IMR-90 (cell line): ENCODE measurements at regions of chr17 and their contacts with region 1.

Region 1: GRCh38 chr17:59619293-59620063 is at the start of gene CLTC:
- DNase-seq: peak; percentile 98
- ATAC-seq: peak; percentile 83
- H3K4me3 ChIP-seq: peak within 1 kb of the TSS; percentile 61
- H3K27ac ChIP-seq: peak within 1 kb of the TSS; percentile 93
- H3K4me1 ChIP-seq: peaks cover 1% of the 10 kb centered on the region; the same call in 1 of the 2 replicates
- H3K27me3 ChIP-seq: no peaks in the 10 kb centered on the region
- CTCF ChIP-seq: no peak
- POLR2A ChIP-seq: peak; percentile 95
- RAD21 ChIP-seq: 0 out of 2 replicates have a peak, but pooled peaks have one; percentile 7
- total RNA-seq, gene CLTC: 576 and 641 TPM in 2 replicates

Region 2: GRCh38 chr17:59565171-59565969 is 54.1 kb before region 1 on chr17 and contains the start of gene DHX40:
- CTCF ChIA-PET with region 1: no interaction called
- POLR2A ChIA-PET with region 1: no interaction called
- dilution Hi-C with region 1: no loop called
- in situ Hi-C with region 1: no loop called
- intact Hi-C with region 1: no loop called
- DNase-seq: peak; percentile 96
- ATAC-seq: peak; percentile 97
- H3K4me3 ChIP-seq: peak within 1 kb of the TSS; percentile 91
- H3K27ac ChIP-seq: peak within 1 kb of the TSS; percentile 62
- H3K4me1 ChIP-seq: 0 out of 2 replicates have a peak, but pooled peaks cover 2% of the 10 kb centered on the region
- H3K27me3 ChIP-seq: no peaks in the 10 kb centered on the region
- CTCF ChIP-seq: no peak
- POLR2A ChIP-seq: peak; percentile 75
- RAD21 ChIP-seq: no peak
- total RNA-seq, gene DHX40: 44.4 and 54.2 TPM in 2 replicates

Region 3: GRCh38 chr17:59607817-59608403 is 11.6 kb before region 1 on chr17:
- CTCF ChIA-PET with region 1: interaction called, 12 read pairs
- POLR2A ChIA-PET with region 1: interaction called, 4 read pairs
- dilution Hi-C with region 1: no loop called
- in situ Hi-C with region 1: no loop called
- intact Hi-C with region 1: no loop called
- DNase-seq: no peak
- ATAC-seq: no peak
- H3K4me3 ChIP-seq: no peak overlapping the region
- H3K27ac ChIP-seq: no peak overlapping the region
- H3K4me1 ChIP-seq: no peaks in the 10 kb centered on the region
- H3K27me3 ChIP-seq: no peaks in the 10 kb centered on the region
- CTCF ChIP-seq: 0 out of 2 replicates have a peak, but pooled peaks have one; percentile 14
- POLR2A ChIP-seq: no peak
- RAD21 ChIP-seq: no peak

Region 4: DNA sequence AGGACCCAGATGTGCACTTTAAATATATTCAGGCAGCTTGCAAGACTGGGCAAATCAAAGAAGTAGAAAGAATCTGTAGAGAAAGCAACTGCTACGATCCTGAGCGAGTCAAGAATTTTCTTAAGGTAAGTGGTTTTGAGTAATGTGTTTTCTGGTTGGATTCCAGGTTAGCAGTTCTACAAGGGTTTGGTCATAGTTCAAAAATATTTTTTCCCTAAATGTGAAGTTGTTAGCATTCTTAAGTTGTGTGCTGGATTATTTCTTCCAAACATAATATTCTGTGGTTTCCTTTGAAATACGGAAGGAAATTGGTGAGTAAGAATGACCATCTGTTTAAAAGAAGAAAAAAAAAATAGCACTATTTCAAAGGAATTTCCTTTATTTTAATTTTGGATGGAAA is 49.3 kb after region 1 on chr17:
- CTCF ChIA-PET with region 1: no interaction called
- POLR2A ChIA-PET with region 1: no interaction called
- dilution Hi-C with region 1: no loop called
- in situ Hi-C with region 1: no loop called
- intact Hi-C with region 1: loop called (anchors 5 kb)
- DNase-seq: peak; percentile 97
- ATAC-seq: peak; percentile 71
- H3K4me3 ChIP-seq: no peak overlapping the region
- H3K27ac ChIP-seq: no peak overlapping the region
- H3K4me1 ChIP-seq: peaks cover 14% of the 10 kb centered on the region
- H3K27me3 ChIP-seq: no peaks in the 10 kb centered on the region
- CTCF ChIP-seq: no peak
- POLR2A ChIP-seq: no peak
- RAD21 ChIP-seq: no peak

Region 5: GRCh38 chr17:59778996-59779395 is 159.5 kb after region 1 on chr17:
- CTCF ChIA-PET with region 1: no interaction called
- POLR2A ChIA-PET with region 1: no interaction called
- dilution Hi-C with region 1: no loop called
- in situ Hi-C with region 1: no loop called
- intact Hi-C with region 1: no loop called
- DNase-seq: no peak
- ATAC-seq: no peak
- H3K4me3 ChIP-seq: no peak overlapping the region
- H3K27ac ChIP-seq: no peak overlapping the region
- H3K4me1 ChIP-seq: peaks cover 11% of the 10 kb centered on the region
- H3K27me3 ChIP-seq: no peaks in the 10 kb centered on the region
- CTCF ChIP-seq: no peak
- POLR2A ChIP-seq: no peak
- RAD21 ChIP-seq: no peak